GM12878 (cell line): ENCODE measurements at regions of chr17 and their contacts with region 1.

Region 1: GRCh38 chr17:35747540-35748017 is 5.5 kb downstream of the GAS2L2 start:
- DNase-seq: peak; percentile 17
- ATAC-seq: peak; percentile 97
- H3K4me3 ChIP-seq: no peak overlapping the region
- H3K27ac ChIP-seq: no peak overlapping the region
- H3K4me1 ChIP-seq: no peaks in the 10 kb centered on the region
- H3K27me3 ChIP-seq: peaks cover 2 to 6% of the 10 kb centered on the region in 2 experiments; a peak in 3 of 4 replicates
- CTCF ChIP-seq: peak; percentile 80 to 93 (median 85)
- EP300 ChIP-seq: no peak
- POLR2A ChIP-seq: no peak
- RAD21 ChIP-seq: peak; percentile 89

Region 2: DNA sequence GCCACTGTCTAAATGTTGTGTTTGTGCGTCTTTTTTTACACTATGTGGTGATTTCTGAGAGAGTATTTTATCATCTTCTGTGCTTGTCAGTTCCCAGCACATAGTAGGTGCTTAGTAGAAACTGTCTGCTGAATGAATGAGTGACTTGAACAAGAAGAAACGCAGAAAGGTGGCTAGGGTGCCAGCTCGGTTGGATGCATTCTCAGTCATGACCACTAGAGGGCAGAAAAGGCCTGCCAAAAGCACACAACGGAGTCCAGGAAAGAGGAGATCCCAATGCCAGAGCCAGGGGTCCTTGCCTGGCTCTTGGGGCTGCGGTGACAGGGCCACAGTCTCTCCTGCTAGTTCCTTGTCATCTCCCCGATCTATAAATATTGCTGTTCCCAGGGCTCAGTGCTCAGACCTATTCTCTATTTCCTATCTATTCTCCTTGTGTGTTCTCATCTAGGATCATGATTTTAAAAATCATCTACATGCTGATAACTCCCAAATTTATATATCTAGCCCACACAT is 1327.3 kb before region 1 on chr17:
- CTCF ChIA-PET with region 1: no interaction called
- POLR2A ChIA-PET with region 1: no interaction called
- RAD21 ChIA-PET with region 1: no interaction called
- SMC1A ChIA-PET with region 1: no interaction called
- in situ Hi-C with region 1: no loop called
- intact Hi-C with region 1: loop called (anchors 10 kb)
- DNase-seq: peak; percentile 11
- ATAC-seq: peak; percentile 82
- H3K4me3 ChIP-seq: no peak overlapping the region
- H3K27ac ChIP-seq: no peak overlapping the region
- H3K4me1 ChIP-seq: no peaks in the 10 kb centered on the region
- H3K27me3 ChIP-seq: peaks cover 5 to 10% of the 10 kb centered on the region in 2 experiments
- CTCF ChIP-seq: peak; percentile 88 to 94 (median 89)
- EP300 ChIP-seq: no peak
- POLR2A ChIP-seq: no peak
- RAD21 ChIP-seq: peak; percentile 91

Region 3: DNA sequence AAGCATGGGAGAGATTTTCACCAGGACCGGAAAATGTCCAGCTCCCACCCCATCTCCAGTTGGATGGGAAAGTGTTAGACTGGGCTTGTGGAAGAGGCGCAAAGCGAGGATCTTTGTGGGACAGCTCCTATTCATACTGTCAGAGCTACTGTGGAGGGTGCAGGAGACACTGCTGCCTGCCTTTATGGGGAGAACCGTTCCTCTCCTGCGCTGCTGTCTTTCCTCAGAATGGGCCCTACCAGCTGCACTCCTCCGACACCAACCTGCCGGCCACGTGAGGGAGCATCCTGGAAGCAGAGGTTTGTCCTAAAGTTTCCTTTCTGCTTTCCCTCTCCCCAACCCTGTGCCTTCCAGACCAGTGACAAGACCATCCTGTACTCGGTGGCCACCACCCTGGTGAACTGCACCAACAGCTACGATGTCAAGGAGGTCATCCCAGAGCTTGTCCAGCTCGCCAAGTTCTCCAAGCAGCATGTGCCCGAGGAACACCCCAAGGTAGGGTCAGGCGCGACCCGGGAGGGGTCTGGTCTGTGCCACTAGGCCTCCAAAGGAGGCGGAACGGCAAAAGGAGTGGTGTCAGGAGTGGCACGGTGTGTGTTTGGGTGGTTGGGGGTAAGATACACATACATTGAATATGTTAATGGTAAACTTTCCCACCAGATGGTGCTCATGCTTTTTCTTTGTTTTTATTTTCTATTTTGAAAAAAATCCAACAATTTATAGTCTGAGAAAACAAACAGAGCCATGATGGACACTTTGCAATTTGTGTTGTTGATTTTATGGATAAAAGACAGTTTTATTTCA is 576.4 kb before region 1 on chr17:
- CTCF ChIA-PET with region 1: interaction called, 18 read pairs
- POLR2A ChIA-PET with region 1: no interaction called
- RAD21 ChIA-PET with region 1: interaction called, 3 read pairs
- SMC1A ChIA-PET with region 1: no interaction called
- in situ Hi-C with region 1: loop called (anchors 10 kb)
- intact Hi-C with region 1: loop called (anchors 2 kb)
- DNase-seq: no peak
- ATAC-seq: peak; percentile 70
- H3K4me3 ChIP-seq: no peak overlapping the region
- H3K27ac ChIP-seq: no peak overlapping the region
- H3K4me1 ChIP-seq: no peaks in the 10 kb centered on the region
- H3K27me3 ChIP-seq: peaks cover 0 to 5% of the 10 kb centered on the region in 2 experiments; a peak in 3 of 4 replicates
- CTCF ChIP-seq: peak in 2 of 3 experiments; percentile 3 to 37; a peak in 2 of 6 replicates
- EP300 ChIP-seq: no peak
- POLR2A ChIP-seq: no peak
- RAD21 ChIP-seq: peak; percentile 30; the same call in 1 of the 2 replicates

Region 4: GRCh38 chr17:35555695-35556094 is 191.9 kb before region 1 on chr17:
- CTCF ChIA-PET with region 1: interaction called, 14 read pairs
- POLR2A ChIA-PET with region 1: no interaction called
- RAD21 ChIA-PET with region 1: interaction called, 5 read pairs
- SMC1A ChIA-PET with region 1: no interaction called
- in situ Hi-C with region 1: no loop called
- intact Hi-C with region 1: loop called (anchors 5 kb)
- DNase-seq: no peak
- ATAC-seq: peak; percentile 49; the same call in 2 of the 3 replicates
- H3K4me3 ChIP-seq: no peak overlapping the region
- H3K27ac ChIP-seq: no peak overlapping the region
- H3K4me1 ChIP-seq: no peaks in the 10 kb centered on the region
- H3K27me3 ChIP-seq: no peaks in the 10 kb centered on the region
- CTCF ChIP-seq: peak; percentile 22 to 36 (median 25); a peak in 4 of 6 replicates
- EP300 ChIP-seq: no peak
- POLR2A ChIP-seq: no peak
- RAD21 ChIP-seq: peak; percentile 44; the same call in 1 of the 2 replicates

Region 5: GRCh38 chr17:35605678-35606077 is 141.9 kb before region 1 on chr17:
- CTCF ChIA-PET with region 1: interaction called, 116 read pairs
- POLR2A ChIA-PET with region 1: no interaction called
- RAD21 ChIA-PET with region 1: interaction called, 55 read pairs
- SMC1A ChIA-PET with region 1: interaction called, 3 read pairs
- in situ Hi-C with region 1: loop called (anchors 5 kb)
- intact Hi-C with region 1: no loop called
- DNase-seq: no peak
- ATAC-seq: no peak
- H3K4me3 ChIP-seq: no peak overlapping the region
- H3K27ac ChIP-seq: no peak overlapping the region
- H3K4me1 ChIP-seq: no peaks in the 10 kb centered on the region
- H3K27me3 ChIP-seq: no peaks in the 10 kb centered on the region
- CTCF ChIP-seq: no peak
- EP300 ChIP-seq: no peak
- POLR2A ChIP-seq: no peak
- RAD21 ChIP-seq: no peak

Region 6: GRCh38 chr17:35726127-35726952 is 21.2 kb before region 1 on chr17:
- CTCF ChIA-PET with region 1: interaction called, 11 read pairs
- POLR2A ChIA-PET with region 1: no interaction called
- RAD21 ChIA-PET with region 1: no interaction called
- SMC1A ChIA-PET with region 1: no interaction called
- in situ Hi-C with region 1: no loop called
- intact Hi-C with region 1: no loop called
- DNase-seq: no peak
- ATAC-seq: no peak
- H3K4me3 ChIP-seq: no peak overlapping the region
- H3K27ac ChIP-seq: no peak overlapping the region
- H3K4me1 ChIP-seq: no peaks in the 10 kb centered on the region
- H3K27me3 ChIP-seq: no peaks in the 10 kb centered on the region
- CTCF ChIP-seq: no peak
- EP300 ChIP-seq: no peak
- POLR2A ChIP-seq: no peak
- RAD21 ChIP-seq: no peak

Region 7: DNA sequence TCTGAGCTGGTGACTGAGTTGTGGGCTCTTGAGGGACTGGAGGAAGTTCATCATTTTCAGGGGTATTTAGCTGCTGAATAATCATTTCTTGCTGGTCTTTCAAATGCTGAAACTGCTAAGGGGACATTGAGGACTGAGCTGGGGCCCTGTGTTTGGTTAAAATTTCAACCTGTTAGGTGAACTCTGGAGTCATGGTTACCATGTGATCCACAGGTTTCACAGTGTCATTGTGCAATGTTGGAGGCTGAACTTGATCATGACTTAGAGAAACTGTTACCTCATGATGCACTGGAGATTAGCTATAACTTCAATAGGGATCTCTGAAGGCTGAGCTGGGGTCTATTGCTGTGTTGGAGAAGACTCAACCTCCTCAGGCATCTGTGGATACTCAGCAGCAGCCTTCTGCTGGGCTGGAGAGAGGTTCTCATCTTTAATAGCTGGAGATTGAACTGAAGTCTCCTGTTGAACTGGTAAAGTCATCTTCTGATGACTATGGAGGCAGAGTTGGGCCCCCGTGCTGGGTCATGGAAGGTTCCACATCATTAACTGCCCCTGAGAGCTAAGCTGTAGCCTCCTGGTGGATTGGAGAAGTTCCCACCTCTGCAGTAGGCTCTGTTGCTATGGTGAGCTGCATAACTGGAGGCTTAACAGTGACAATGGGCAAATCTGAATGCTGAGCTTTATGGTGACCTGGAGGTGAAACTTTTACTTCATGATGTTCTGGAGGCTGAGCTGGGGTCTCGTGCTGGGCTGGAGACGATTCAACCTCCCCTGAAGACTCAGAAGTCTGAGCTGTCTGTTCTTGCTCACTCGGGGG is 167.8 kb after region 1 on chr17:
- CTCF ChIA-PET with region 1: no interaction called
- POLR2A ChIA-PET with region 1: no interaction called
- RAD21 ChIA-PET with region 1: no interaction called
- SMC1A ChIA-PET with region 1: no interaction called
- in situ Hi-C with region 1: no loop called
- intact Hi-C with region 1: no loop called
- DNase-seq: no peak
- ATAC-seq: no peak
- H3K4me3 ChIP-seq: no peak overlapping the region
- H3K27ac ChIP-seq: no peak overlapping the region
- H3K4me1 ChIP-seq: no peaks in the 10 kb centered on the region
- H3K27me3 ChIP-seq: no peaks in the 10 kb centered on the region
- CTCF ChIP-seq: no peak
- EP300 ChIP-seq: no peak
- POLR2A ChIP-seq: no peak
- RAD21 ChIP-seq: no peak